Mucosa of descending colon (tissue), 3 donors: ENCODE measurements at regions of chr14 and their contacts with region 1.

Region 1: GRCh38 chr14:96297000-96297399 is 41.0 kb downstream of the BDKRB1 start:
- DNase-seq: no peak
- ATAC-seq: no peak
- H3K4me3 ChIP-seq: no peak overlapping the region
- H3K4me1 ChIP-seq: no peaks in the 10 kb centered on the region
- CTCF ChIP-seq: no peak

Region 2: GRCh38 chr14:96320605-96321004 is 23.6 kb after region 1 on chr14:
- intact Hi-C with region 1: no loop called
- DNase-seq: no peak
- ATAC-seq: no peak
- H3K4me3 ChIP-seq: no peak overlapping the region
- H3K4me1 ChIP-seq: no peaks in the 10 kb centered on the region
- CTCF ChIP-seq: no peak

Region 3: DNA sequence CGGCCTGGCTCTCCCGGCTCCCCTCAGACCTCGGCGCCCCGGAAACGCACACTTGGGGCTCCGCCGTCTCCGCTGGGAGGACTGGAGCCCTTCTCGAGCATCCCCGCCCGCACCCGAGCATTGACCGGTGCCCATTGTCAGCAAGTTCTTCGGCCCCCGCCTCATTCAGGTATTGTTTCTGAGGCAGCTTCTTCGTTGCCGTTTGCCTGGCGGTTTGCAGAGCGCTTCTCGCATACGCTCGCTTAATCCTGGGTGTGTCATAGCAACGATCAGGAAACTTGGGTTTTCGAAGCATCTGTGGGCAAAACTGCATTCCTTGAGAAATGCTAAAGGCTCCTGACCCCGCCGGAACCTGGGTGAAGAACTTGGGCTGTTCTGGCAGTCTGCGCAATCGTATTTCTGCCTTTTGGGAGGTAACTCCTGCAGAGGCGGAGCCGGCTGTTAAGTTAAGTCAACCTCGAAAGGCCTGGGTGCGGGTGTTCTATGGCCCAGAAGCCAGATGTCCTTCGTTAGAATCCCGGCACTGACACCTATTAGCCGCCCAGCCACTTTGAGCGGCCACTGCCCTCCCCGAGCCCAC is 66.8 kb after region 1 on chr14:
- intact Hi-C with region 1: no loop called
- DNase-seq: peak; percentile 77 to 84 (median 80)
- ATAC-seq: peak; percentile 68
- H3K4me3 ChIP-seq: peak overlapping the region; percentile 95
- H3K4me1 ChIP-seq: peaks cover 33% of the 10 kb centered on the region
- CTCF ChIP-seq: no peak

Region 4: DNA sequence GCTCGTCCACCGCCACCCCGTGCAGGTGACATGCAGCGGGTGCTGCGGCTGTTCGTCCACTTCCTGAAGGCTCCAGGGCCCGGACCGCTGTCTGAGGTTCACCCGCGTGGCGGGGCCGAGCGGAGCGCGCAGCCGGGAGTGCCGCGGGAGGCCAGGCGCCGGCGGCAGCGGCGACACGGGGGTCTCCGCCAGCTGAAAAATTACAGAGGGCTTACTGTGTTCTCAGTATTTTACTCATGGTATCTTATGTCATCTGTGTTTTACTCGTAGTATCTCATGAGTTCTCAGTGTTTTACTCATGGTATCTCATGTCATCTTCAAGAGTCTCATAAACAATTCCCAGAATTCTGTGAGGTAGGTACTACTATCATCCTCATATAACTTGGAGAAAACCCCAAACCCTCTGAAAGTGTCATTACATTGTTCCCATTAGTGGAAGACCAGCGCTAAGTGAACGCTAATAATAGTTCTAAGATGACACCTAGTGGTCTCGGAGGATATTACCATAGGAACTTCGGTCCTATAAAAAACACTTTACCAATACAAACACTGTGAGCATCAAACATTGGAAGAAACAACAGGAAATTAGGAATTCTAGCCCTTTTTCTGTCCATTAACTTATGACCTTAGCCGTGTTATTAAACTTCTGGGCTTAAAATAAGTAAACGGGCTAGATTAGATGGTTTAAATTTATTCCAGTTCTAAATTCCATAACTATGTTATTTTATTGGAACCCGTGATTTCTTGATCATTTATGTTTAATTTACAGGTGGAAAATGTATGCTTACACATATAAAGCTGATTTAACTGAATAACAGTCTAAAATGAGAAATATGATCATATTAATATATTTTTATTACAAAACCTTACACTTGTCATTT is 127.3 kb after region 1 on chr14:
- intact Hi-C with region 1: loop called (anchors 5 to 10 kb)
- DNase-seq: peak; percentile 61 to 72 (median 66)
- ATAC-seq: peak; percentile 96
- H3K4me3 ChIP-seq: no peak overlapping the region
- H3K4me1 ChIP-seq: no peaks in the 10 kb centered on the region
- CTCF ChIP-seq: peak; percentile 58